CD4-positive, alpha-beta T cell (primary cell): ENCODE measurements at regions of chr5 and their contacts with region 1.

Region 1: DNA sequence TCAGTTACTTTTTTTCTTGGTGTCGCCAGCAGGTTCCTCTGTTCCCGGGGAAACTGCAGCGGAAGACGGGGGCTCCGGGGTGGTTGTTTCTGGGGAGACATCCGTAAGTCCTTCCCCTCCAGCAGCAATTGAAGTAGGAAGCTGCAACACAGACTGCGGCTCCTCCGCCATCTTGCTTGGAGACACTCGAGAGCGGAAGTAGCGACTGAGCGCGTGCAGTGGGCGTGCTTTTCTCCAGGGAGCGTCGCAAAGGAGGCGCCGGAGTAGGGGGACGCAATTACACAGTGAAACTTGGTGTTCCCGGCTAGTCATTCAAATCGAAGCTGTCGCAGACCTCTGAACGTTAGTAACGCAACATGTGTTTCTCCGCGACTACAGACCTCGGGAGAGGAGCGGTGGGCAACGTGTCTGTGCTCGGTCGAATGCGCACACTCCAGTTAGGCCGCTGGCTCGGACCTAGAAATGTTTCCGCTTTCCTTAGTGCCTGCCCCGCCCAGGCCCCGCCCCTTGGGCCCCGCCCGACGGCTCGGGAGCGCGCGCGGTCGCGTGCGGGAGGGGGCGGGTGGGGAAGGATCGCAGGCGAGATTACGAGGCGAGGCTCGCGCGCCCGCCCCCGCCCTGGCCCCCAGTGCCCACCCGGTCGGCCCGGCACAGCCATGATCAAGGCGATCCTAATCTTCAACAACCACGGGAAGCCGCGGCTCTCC is at the starts of genes AP3S1 and ATG12:
- DNase-seq: peak; percentile 79 to 96 (median 89)
- ATAC-seq: peak; percentile 89
- H3K4me3 ChIP-seq: peak within 1 kb of the TSS; percentile 71
- H3K4me3 Mint-ChIP-seq: peak within 1 kb of the TSS; percentile 99
- H3K27ac ChIP-seq: peak within 1 kb of the TSS; percentile 85 to 97
- H3K27ac Mint-ChIP-seq: peak within 1 kb of the TSS; percentile 97
- H3K4me1 ChIP-seq: peaks cover 25% of the 10 kb centered on the region
- H3K4me1 Mint-ChIP-seq: peaks cover 76% of the 10 kb centered on the region
- H3K27me3 ChIP-seq: no peaks in the 10 kb centered on the region
- H3K27me3 Mint-ChIP-seq: no peaks in the 10 kb centered on the region
- CTCF ChIP-seq: no peak
- total RNA-seq, gene AP3S1: 33.2 to 33.6 TPM
- total RNA-seq, gene ATG12: 61.0 to 62.2 TPM

Region 2: DNA sequence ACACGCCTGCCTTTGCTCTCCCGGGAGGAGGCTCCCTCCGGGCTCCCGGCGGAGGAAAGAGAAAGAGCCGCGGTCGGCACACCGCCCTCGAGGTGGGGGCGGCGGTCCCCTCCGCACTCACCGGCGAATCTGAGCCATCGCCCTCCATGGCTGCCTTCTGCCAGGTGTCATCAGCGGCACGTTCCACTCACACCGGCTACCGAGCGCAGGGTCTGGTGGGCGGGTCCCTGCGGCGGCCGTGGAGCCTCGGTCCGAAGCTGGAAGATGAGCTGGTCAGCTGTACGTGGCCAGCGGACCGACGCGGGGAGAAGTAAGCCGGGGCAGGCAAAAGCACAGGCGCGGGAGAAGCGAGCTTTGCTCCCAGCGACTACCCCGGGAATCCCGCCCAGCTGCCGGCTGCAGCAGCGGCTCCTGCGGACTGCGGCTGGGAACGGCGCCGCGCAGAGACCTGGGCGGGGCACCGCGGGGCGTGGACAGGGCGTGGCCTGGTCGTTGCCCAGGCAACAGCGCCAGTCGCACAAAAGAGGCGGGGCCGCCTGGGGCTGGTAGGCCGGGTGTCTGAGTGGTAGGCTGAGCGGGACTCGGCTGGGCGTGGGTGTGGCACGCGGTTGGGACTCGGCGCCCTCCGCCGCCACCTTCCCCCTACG is 671.9 kb before region 1 on chr5 and contains the start of gene TRIM36:
- CTCF ChIA-PET with region 1: no interaction called
- POLR2A ChIA-PET with region 1: no interaction called
- intact Hi-C with region 1: loop called in 1 of 2 experiments (anchors 5 kb)
- DNase-seq: peak; percentile 66 to 92 (median 82)
- ATAC-seq: peak; percentile 90
- H3K4me3 ChIP-seq: peak within 1 kb of the TSS; percentile 69
- H3K4me3 Mint-ChIP-seq: peak within 1 kb of the TSS; percentile 85
- H3K27ac ChIP-seq: no peak within 1 kb of the TSS
- H3K27ac Mint-ChIP-seq: no peak within 1 kb of the TSS
- H3K4me1 ChIP-seq: peaks cover 22% of the 10 kb centered on the region
- H3K4me1 Mint-ChIP-seq: peaks cover 15% of the 10 kb centered on the region
- H3K27me3 ChIP-seq: peaks cover 57 to 84% of the 10 kb centered on the region in 2 experiments
- H3K27me3 Mint-ChIP-seq: peaks cover 83% of the 10 kb centered on the region
- CTCF ChIP-seq: no peak
- total RNA-seq, gene TRIM36: 0.14 TPM in 1 of 2 experiments, not detected in the other

Region 3: DNA sequence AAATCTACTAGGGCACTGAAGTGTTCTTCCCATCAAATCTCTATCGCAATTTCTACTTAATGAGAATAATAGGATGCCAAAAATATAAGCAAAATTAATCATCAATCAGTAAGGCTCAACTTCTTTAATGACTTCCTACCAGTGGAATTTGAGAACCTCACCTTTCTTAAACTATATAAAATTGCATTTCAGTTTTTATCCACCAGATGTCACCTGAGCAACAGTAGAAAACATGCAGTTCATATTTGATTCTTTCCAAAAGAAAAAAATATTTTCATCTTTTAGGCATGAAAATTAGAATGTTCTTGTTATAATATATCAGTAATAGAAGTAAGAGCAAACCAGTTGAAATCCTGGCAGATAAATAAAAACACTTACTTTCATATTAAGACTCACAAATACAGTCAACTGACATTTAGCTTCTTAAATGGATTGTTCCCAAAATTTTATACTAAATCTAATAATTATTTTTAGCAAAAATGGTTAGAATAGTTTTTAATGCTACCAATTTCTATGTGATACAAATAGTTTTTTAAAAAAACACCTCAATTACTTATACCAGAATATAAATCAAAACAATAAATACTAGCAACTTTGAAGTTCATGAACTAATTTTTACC is 531.7 kb before region 1 on chr5:
- CTCF ChIA-PET with region 1: no interaction called
- POLR2A ChIA-PET with region 1: no interaction called
- intact Hi-C with region 1: loop called (anchors 2 to 5 kb)
- DNase-seq: peak in 3 of 14 experiments; percentile 61 to 68 (median 66)
- ATAC-seq: peak; percentile 52
- H3K4me3 ChIP-seq: no peak overlapping the region
- H3K4me3 Mint-ChIP-seq: no peak overlapping the region
- H3K27ac ChIP-seq: no peak overlapping the region
- H3K27ac Mint-ChIP-seq: no peak overlapping the region
- H3K4me1 ChIP-seq: no peaks in the 10 kb centered on the region
- H3K4me1 Mint-ChIP-seq: no peaks in the 10 kb centered on the region
- H3K27me3 ChIP-seq: peaks cover 4 to 14% of the 10 kb centered on the region in 2 experiments
- H3K27me3 Mint-ChIP-seq: peaks cover 48% of the 10 kb centered on the region
- CTCF ChIP-seq: peak; percentile 83

Region 4: DNA sequence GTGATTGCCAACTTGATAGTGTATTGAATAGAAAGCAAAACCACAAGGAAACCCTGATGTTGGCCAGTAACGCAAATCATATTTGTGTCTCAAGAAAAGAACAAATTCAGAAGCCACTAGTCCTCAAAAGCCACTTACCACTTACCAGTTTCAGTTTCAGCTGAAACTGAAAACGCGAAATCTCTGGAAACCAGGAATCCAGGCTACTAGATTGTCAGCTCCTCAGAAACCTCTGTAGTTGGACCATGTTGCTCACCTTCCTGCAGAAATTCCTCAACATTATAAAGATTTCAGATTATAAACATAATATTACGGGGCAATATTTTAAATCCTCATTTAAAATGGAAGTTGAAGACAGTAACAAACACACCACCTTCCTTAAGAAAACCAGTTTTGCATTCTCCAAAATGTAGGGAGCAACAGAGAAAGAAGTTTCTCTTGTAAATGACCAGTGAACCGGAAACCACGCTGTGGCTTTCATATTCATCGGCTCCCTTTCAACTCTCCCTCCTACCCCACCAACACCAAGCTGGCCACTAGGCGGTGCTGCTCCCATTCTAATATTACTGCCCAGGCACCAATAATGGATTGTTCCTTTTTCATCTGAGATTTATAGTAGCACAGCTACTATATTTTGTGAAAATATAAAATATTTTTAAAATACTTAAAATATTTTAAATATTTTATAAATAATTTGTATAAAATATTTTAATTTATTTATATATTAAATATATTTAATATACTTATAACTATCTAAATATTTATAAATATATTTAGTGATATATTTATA is 207.0 kb before region 1 on chr5:
- CTCF ChIA-PET with region 1: interaction called, 4 read pairs
- POLR2A ChIA-PET with region 1: interaction called, 12 read pairs
- intact Hi-C with region 1: loop called (anchors 1 to 2 kb)
- DNase-seq: peak; percentile 67 to 88 (median 78)
- ATAC-seq: peak; percentile 96
- H3K4me3 ChIP-seq: peak overlapping the region; percentile 30
- H3K4me3 Mint-ChIP-seq: peak overlapping the region; percentile 64
- H3K27ac ChIP-seq: no peak overlapping the region
- H3K27ac Mint-ChIP-seq: no peak overlapping the region
- H3K4me1 ChIP-seq: peaks cover 5% of the 10 kb centered on the region
- H3K4me1 Mint-ChIP-seq: peaks cover 8% of the 10 kb centered on the region
- H3K27me3 ChIP-seq: no peaks in the 10 kb centered on the region
- H3K27me3 Mint-ChIP-seq: no peaks in the 10 kb centered on the region
- CTCF ChIP-seq: peak; percentile 92

Region 5: GRCh38 chr5:116084871-116085715 is 243.6 kb after region 1 on chr5 and contains the start of gene COMMD10:
- CTCF ChIA-PET with region 1: no interaction called
- POLR2A ChIA-PET with region 1: interaction called, 11 read pairs
- intact Hi-C with region 1: loop called (anchors 2 to 5 kb)
- DNase-seq: peak; percentile 58 to 93 (median 72)
- ATAC-seq: peak; percentile 90
- H3K4me3 ChIP-seq: peak within 1 kb of the TSS; percentile 86
- H3K4me3 Mint-ChIP-seq: peak within 1 kb of the TSS; percentile 99
- H3K27ac ChIP-seq: peak within 1 kb of the TSS; percentile 81 to 82
- H3K27ac Mint-ChIP-seq: peak within 1 kb of the TSS; percentile 99
- H3K4me1 ChIP-seq: peaks cover 16% of the 10 kb centered on the region
- H3K4me1 Mint-ChIP-seq: peaks cover 76% of the 10 kb centered on the region
- H3K27me3 ChIP-seq: no peaks in the 10 kb centered on the region
- H3K27me3 Mint-ChIP-seq: no peaks in the 10 kb centered on the region
- CTCF ChIP-seq: no peak
- total RNA-seq, gene COMMD10: 26.0 to 27.6 TPM